Activated B cell treated with CpG ODN at 0.5 μM for 24 hours (primary cell): ENCODE measurements at regions of chr2 and their contacts with region 1.

Region 1: GRCh38 chr2:96527286-96528005 is 9.1 kb upstream of the ARID5A start:
- DNase-seq: peak; percentile 57
- ATAC-seq: peak; percentile 47
- H3K4me3 Mint-ChIP-seq: peak overlapping the region; percentile 83
- H3K27ac Mint-ChIP-seq: peak overlapping the region; percentile 83
- H3K4me1 Mint-ChIP-seq: peaks cover 56% of the 10 kb centered on the region
- H3K27me3 Mint-ChIP-seq: peaks cover 3% of the 10 kb centered on the region
- CTCF ChIP-seq: no peak

Region 2: GRCh38 chr2:96427917-96428316 is 99.5 kb before region 1 on chr2:
- CTCF ChIA-PET with region 1: no interaction called
- POLR2A ChIA-PET with region 1: no interaction called
- intact Hi-C with region 1: no loop called
- DNase-seq: no peak
- ATAC-seq: no peak
- H3K4me3 Mint-ChIP-seq: no peak overlapping the region
- H3K27ac Mint-ChIP-seq: no peak overlapping the region
- H3K4me1 Mint-ChIP-seq: no peaks in the 10 kb centered on the region
- H3K27me3 Mint-ChIP-seq: peaks cover 34% of the 10 kb centered on the region
- CTCF ChIP-seq: no peak

Region 3: GRCh38 chr2:96517079-96517478 is 10.4 kb before region 1 on chr2:
- CTCF ChIA-PET with region 1: interaction called, 4 read pairs
- POLR2A ChIA-PET with region 1: interaction called, 12 read pairs
- intact Hi-C with region 1: no loop called
- DNase-seq: no peak
- ATAC-seq: no peak
- H3K4me3 Mint-ChIP-seq: no peak overlapping the region
- H3K27ac Mint-ChIP-seq: no peak overlapping the region
- H3K4me1 Mint-ChIP-seq: no peaks in the 10 kb centered on the region
- H3K27me3 Mint-ChIP-seq: no peaks in the 10 kb centered on the region
- CTCF ChIP-seq: no peak

Region 4: GRCh38 chr2:96739633-96740428 is 212.4 kb after region 1 on chr2 and contains the start of gene LMAN2L:
- CTCF ChIA-PET with region 1: no interaction called
- POLR2A ChIA-PET with region 1: no interaction called
- intact Hi-C with region 1: no loop called
- DNase-seq: peak; percentile 88
- ATAC-seq: peak; percentile 99
- H3K4me3 Mint-ChIP-seq: peak within 1 kb of the TSS; percentile 98
- H3K27ac Mint-ChIP-seq: peak within 1 kb of the TSS; percentile 94
- H3K4me1 Mint-ChIP-seq: peaks cover 33% of the 10 kb centered on the region
- H3K27me3 Mint-ChIP-seq: no peaks in the 10 kb centered on the region
- CTCF ChIP-seq: no peak
- total RNA-seq, gene LMAN2L: 7.1 and 8.9 TPM in 2 replicates